ENCODE measurements at regions of chr20 and their contacts with region 1.

Region 1: GRCh38 chr20:50731055-50731871 is at the start of gene PARD6B:
- DNase-seq: peak; percentile 99
- H3K4me3 Mint-ChIP-seq: peak within 1 kb of the TSS; percentile 77
- H3K27ac Mint-ChIP-seq: peak within 1 kb of the TSS; percentile 74
- H3K4me1 Mint-ChIP-seq: peaks cover 40% of the 10 kb centered on the region
- H3K27me3 Mint-ChIP-seq: no peaks in the 10 kb centered on the region
- CTCF ChIP-seq: no peak
- total RNA-seq, gene PARD6B: 5.3 and 5.8 TPM in 2 replicates

Region 2: DNA sequence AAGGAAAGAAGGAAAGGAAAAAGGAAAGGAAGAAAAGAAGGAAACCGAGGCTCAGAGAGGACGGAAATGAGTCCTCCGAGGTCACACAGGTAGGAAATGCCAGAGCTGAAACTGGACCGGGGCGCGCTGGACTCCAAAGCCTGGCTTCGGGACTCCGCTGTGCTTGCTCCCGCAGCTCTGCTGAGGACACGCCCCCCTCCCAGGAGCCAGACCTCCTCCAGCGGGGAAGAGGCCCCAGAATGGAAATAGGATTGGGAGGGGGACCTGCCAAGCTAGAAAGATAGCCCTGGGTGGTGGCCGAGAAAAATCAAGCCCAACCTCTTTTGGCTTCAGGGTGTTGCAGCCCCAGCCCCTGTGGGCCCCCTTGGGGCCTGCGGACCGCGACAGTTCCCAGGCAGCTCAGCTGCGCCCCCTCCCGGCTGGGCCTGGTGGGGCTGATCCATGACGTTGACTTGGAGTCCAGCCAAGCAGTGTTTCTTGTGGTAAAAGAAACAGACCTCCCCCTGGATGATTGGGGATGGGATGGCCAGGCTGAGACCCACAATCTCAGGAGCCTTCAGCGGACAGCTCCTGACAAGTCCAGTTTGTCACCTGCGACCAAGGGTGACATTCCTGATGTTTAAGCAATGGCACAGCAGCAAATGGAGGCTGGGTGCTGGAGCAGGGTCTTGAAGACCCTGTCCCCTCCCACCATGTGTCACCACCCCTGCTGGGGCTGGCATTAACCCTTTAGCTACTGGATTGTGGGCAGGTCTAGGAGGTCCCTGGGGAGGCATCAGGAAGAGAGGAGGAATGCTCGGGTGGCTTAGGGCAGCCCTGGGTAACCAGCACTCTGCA is 95.4 kb before region 1 on chr20:
- CTCF ChIA-PET with region 1: interaction called, 10 read pairs
- POLR2A ChIA-PET with region 1: interaction called, 3 read pairs
- intact Hi-C with region 1: no loop called
- DNase-seq: peak; percentile 66
- H3K4me3 Mint-ChIP-seq: no peak overlapping the region
- H3K27ac Mint-ChIP-seq: no peak overlapping the region
- H3K4me1 Mint-ChIP-seq: peaks cover 6% of the 10 kb centered on the region
- H3K27me3 Mint-ChIP-seq: no peaks in the 10 kb centered on the region
- CTCF ChIP-seq: peak; percentile 91

Region 3: GRCh38 chr20:50717974-50718761 is 13.1 kb before region 1 on chr20:
- CTCF ChIA-PET with region 1: no interaction called
- POLR2A ChIA-PET with region 1: interaction called, 16 read pairs
- intact Hi-C with region 1: no loop called
- DNase-seq: no peak
- H3K4me3 Mint-ChIP-seq: no peak overlapping the region
- H3K27ac Mint-ChIP-seq: no peak overlapping the region
- H3K4me1 Mint-ChIP-seq: peaks cover 6% of the 10 kb centered on the region
- H3K27me3 Mint-ChIP-seq: no peaks in the 10 kb centered on the region
- CTCF ChIP-seq: no peak

Region 4: DNA sequence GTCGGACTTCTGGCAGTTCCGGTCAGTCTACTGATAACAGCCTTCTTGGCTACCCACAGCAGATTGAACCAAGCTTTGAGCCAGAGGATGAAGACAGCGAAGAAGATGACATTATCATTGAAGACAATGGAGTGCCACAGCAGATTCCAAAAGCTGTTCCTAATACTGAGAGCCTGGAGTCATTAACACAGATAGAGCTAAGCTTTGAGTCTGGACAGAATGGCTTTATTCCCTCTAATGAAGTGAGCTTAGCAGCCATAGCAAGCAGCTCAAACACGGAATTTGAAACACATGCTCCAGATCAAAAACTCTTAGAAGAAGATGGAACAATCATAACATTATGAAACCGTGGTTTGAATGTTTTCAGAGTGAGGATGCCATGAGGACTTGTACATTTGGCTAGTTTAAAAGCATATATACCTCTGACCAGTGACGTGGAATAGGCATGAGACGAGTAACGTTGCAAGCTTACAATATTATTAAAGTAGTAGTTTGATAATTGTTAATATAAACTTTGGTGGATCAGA is 18.9 kb after region 1 on chr20:
- CTCF ChIA-PET with region 1: interaction called, 21 read pairs
- POLR2A ChIA-PET with region 1: interaction called, 168 read pairs
- intact Hi-C with region 1: no loop called
- DNase-seq: no peak
- H3K4me3 Mint-ChIP-seq: no peak overlapping the region
- H3K27ac Mint-ChIP-seq: no peak overlapping the region
- H3K4me1 Mint-ChIP-seq: no peaks in the 10 kb centered on the region
- H3K27me3 Mint-ChIP-seq: no peaks in the 10 kb centered on the region
- CTCF ChIP-seq: no peak

Measured in MCF 10A (cell line).